B cell (primary cell): ENCODE measurements at regions of chr19 and their contacts with region 1.

Region 1: DNA sequence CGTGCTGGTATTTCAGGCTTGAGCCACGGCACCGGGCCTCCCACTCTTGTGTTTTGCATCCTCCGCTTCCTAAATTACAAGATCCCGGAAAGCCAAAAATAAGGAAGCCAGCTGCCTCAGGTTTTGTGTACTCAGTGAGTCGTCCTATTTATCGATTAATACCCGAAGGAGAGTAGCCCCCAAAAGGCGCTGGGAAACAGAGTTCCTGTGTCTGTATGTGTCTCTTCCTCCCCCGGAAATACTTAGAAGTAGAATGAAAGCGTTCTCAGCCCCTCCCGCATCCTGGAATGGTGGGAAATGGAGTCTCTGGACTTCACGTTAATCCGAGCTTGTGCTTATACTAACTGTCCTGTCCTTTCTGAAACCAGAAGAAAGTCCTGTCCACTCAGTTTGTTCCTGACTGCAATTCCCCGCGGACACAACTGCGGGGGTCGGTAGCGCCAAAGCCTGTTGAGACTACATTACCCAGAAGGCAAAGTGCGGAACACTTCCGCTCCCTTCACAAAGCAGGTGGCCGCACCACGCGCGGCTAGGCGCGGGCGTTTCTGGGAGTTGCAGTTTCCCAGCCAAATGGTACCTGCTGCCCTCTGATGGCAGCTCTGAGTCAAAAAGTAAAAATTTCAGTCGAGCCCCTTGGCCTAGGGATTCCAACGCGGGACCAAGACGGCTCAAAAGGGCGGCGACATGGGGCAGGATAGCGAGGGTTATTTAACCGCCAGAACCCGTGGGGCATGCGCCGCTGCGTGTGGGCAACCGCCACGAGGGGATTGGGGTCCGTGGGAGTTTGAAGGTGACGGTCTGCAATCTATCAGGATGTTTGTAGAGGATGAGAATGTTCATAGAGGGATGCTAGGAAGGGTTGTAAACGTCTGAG is 2.2 kb upstream of the GSK3A start:
- DNase-seq: peak; percentile 96
- ATAC-seq: peak; percentile 40
- H3K4me3 ChIP-seq: peak overlapping the region; percentile 67 to 97 (median 87)
- H3K4me3 Mint-ChIP-seq: peak overlapping the region; percentile 100
- H3K27ac ChIP-seq: peak overlapping the region; percentile 64 to 71
- H3K27ac Mint-ChIP-seq: peak overlapping the region; percentile 99
- H3K4me1 ChIP-seq: peaks cover 30 to 40% of the 10 kb centered on the region in 2 donors
- H3K4me1 Mint-ChIP-seq: peaks cover 53% of the 10 kb centered on the region
- H3K27me3 ChIP-seq: no peaks in the 10 kb centered on the region
- H3K27me3 Mint-ChIP-seq: no peaks in the 10 kb centered on the region
- CTCF ChIP-seq: peak; percentile 70

Region 2: DNA sequence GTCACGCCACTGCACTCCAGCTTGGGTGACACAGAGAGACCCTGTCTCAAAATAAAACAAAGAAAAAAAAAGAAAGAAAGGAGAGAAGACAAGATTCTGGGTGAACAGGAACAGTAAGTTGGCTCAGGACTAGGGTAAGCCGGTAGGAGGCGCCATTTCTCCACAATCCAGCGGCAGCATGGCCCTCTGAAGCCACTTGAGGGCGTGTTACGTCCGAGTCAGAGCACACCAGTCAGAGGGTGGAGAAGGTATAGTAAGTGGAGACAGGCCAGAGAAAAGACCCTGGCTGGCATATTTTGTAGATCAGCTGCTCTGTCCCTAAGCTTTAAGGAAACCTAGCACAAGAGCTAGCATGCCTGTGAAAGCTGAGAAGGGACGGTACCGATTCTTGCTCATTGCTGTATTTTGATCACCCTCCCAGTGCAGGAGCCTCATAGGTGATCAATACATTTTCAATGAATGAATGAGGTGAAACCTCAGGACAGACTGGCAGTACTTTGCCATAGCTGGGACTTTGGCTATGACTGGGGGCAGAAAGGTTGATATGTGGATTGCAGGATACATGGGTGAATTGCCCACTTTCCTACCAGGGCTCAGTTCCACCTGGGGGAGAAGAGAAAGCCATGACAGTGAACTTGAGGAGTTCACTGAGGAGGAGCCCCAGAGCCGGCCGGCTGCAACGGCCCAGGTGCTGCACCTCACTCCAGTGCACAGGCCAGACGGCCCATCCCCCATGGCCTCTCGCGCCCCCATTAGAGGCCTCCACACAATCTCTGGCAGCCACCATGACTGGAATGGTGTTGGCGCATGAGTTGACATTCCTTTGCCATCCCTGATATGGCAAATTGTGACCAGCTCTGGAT is 135.8 kb before region 1 on chr19:
- CTCF ChIA-PET with region 1: interaction called, 8 read pairs
- POLR2A ChIA-PET with region 1: interaction called, 10 read pairs
- intact Hi-C with region 1: loop called (anchors 1 kb)
- DNase-seq: peak; percentile 92
- ATAC-seq: peak; percentile 98
- H3K4me3 ChIP-seq: no peak overlapping the region
- H3K4me3 Mint-ChIP-seq: peak overlapping the region; percentile 24
- H3K27ac ChIP-seq: peak overlapping the region in 1 of 2 donors; percentile 58
- H3K27ac Mint-ChIP-seq: peak overlapping the region; percentile 71
- H3K4me1 ChIP-seq: peaks cover 33 to 53% of the 10 kb centered on the region in 2 donors
- H3K4me1 Mint-ChIP-seq: peaks cover 57% of the 10 kb centered on the region
- H3K27me3 ChIP-seq: no peaks in the 10 kb centered on the region
- H3K27me3 Mint-ChIP-seq: no peaks in the 10 kb centered on the region
- CTCF ChIP-seq: peak; percentile 100

Region 3: DNA sequence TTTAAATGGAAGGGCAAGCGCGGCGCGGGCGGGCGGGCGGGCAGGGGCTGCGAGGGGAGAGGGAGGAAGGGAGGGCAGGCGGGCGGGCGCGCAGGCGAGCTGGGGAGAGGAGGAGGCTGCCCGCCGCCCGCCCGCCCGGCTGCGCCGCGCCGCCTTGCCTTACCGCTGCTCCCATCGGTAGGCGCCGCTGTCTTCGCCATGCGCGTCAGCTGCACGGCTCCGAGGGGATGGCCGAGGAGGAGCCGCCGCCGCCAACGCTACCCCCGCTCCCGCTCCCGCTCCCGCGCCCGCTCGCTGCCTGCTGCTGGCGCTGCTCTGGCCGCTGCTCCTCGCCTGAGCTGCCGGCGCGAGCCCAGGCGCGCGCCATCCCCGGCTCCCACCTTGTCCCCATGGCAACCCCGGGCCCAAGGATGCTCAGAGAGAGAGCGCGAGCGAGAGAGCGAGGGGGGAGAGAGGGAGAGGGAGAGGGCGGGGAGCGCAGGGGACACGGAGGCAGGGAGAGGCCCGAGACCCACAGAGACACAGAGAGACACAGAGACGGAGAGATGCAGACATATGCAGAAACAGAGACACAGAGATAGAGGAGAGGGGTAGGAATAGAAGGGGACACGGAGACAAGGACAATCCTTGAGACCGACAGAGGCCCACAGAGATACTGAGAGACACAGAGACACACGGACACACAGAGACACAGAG is 67.4 kb before region 1 on chr19:
- CTCF ChIA-PET with region 1: no interaction called
- POLR2A ChIA-PET with region 1: interaction called, 3 read pairs
- intact Hi-C with region 1: loop called (anchors 2 kb)
- DNase-seq: peak; percentile 85
- ATAC-seq: peak; percentile 93
- H3K4me3 ChIP-seq: peak overlapping the region; percentile 3 to 83 (median 48)
- H3K4me3 Mint-ChIP-seq: no peak overlapping the region
- H3K27ac ChIP-seq: no peak overlapping the region
- H3K27ac Mint-ChIP-seq: no peak overlapping the region
- H3K4me1 ChIP-seq: peaks cover 26 to 49% of the 10 kb centered on the region in 2 donors
- H3K4me1 Mint-ChIP-seq: peaks cover 15% of the 10 kb centered on the region
- H3K27me3 ChIP-seq: peaks cover 0 to 49% (median 39%) of the 10 kb centered on the region in 4 experiments
- H3K27me3 Mint-ChIP-seq: peaks cover 20% of the 10 kb centered on the region
- CTCF ChIP-seq: peak; percentile 48

Region 4: DNA sequence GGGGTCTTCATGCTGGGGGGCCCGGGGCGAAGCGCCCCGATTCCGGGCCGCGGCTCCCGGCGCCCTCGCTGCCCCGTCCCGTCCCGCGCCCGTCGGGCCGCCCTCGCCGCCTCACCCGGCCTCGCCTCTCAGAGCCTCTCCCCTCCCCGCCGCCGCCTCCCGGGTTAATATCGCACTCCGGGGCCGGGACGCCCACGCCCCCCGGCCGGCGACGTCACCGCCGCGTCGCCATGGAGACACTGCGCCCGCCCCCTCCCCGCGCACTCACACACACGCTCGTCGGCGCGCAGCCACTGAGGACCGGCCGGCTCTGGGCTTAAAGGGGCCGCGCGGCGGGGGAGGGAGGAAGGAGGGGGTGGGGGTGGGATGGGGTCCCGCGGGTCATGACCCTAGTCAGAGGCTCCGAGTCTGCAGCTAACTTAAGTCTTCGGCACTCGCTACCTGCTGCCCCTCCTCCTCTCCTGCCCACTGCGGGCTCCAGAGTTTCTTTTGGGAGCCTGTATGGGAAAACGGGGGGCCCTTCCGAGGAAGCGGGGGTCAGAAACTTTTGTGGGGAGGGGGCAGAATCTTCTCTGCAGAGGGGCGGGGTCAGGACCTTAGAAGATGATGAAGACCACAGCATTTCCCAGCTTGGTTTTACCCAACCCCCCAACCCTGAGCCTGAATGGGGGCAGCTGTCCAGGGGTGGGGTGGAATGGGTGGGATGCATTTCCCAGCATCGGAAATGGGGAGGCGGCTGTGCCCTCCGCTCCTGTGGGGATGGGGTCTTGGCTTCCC is 10.6 kb after region 1 on chr19 and contains the start of gene ERF:
- CTCF ChIA-PET with region 1: interaction called, 5 read pairs
- POLR2A ChIA-PET with region 1: interaction called, 9 read pairs
- intact Hi-C with region 1: loop called (anchors 1 kb)
- DNase-seq: peak; percentile 97
- ATAC-seq: peak; percentile 68
- H3K4me3 ChIP-seq: peak within 1 kb of the TSS; percentile 36 to 100 (median 99)
- H3K4me3 Mint-ChIP-seq: peak within 1 kb of the TSS; percentile 85
- H3K27ac ChIP-seq: peak within 1 kb of the TSS; percentile 85 to 94
- H3K27ac Mint-ChIP-seq: peak within 1 kb of the TSS; percentile 96
- H3K4me1 ChIP-seq: peaks cover 23 to 41% of the 10 kb centered on the region in 2 donors
- H3K4me1 Mint-ChIP-seq: peaks cover 24% of the 10 kb centered on the region
- H3K27me3 ChIP-seq: peaks cover 0 to 4% (median 0%) of the 10 kb centered on the region in 4 experiments
- H3K27me3 Mint-ChIP-seq: no peaks in the 10 kb centered on the region
- CTCF ChIP-seq: no peak
- total RNA-seq, gene ERF: 48.6 and 62.1 TPM in 2 replicates

Region 5: DNA sequence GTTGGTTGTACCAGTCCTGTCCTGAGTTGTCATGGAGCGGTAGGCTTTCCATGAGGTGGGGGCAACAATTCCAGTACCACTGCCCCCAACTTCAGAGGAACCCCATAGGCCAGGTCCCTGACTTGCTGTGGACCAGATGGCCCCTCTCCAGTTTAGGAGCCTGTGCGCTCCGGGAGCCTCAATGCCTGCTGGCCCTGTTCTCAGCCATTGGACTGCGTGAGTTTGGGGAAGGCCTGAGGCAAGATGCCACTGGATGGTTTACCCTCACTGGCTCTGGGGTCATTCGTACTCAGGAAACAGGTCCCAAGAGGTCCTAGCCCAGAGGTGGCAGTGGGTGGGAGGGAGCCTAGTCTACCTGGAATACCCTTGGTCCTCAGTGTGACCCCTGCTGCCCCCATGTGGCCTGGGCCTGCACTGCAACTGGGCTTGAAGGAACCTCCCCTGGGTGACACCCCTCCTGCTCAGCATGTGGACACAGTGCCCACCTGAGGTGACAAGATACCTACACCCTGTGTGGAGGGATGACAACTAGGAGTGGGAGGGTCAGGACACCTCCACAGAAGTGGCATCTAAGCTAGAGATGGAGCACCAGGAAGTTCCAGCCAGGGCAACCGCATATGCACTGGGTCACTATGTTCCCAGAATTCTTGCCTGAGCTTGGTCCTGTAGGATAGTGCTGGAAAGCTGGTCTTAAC is 51.4 kb after region 1 on chr19:
- CTCF ChIA-PET with region 1: interaction called, 8 read pairs
- POLR2A ChIA-PET with region 1: interaction called, 3 read pairs
- intact Hi-C with region 1: loop called (anchors 1 kb)
- DNase-seq: peak; percentile 89
- ATAC-seq: peak; percentile 98
- H3K4me3 ChIP-seq: no peak overlapping the region
- H3K4me3 Mint-ChIP-seq: no peak overlapping the region
- H3K27ac ChIP-seq: no peak overlapping the region
- H3K27ac Mint-ChIP-seq: peak overlapping the region; percentile 71
- H3K4me1 ChIP-seq: peaks cover 3 to 10% of the 10 kb centered on the region in 2 donors
- H3K4me1 Mint-ChIP-seq: peaks cover 11% of the 10 kb centered on the region
- H3K27me3 ChIP-seq: no peaks in the 10 kb centered on the region
- H3K27me3 Mint-ChIP-seq: no peaks in the 10 kb centered on the region
- CTCF ChIP-seq: peak; percentile 91